Vagina (tissue), 2 donors: ENCODE measurements at regions of chr15 and their contacts with region 1.

Region 1: GRCh38 chr15:67456677-67457529 is 64.0 kb upstream of the C15orf61 start:
- DNase-seq: no peak
- H3K4me3 ChIP-seq: no peak overlapping the region
- H3K27ac ChIP-seq: no peak overlapping the region
- H3K4me1 ChIP-seq: no peaks in the 10 kb centered on the region
- H3K27me3 ChIP-seq: no peaks in the 10 kb centered on the region
- CTCF ChIP-seq: peak; percentile 64 to 74 (median 66)
- POLR2A ChIP-seq: no peak

Region 2: DNA sequence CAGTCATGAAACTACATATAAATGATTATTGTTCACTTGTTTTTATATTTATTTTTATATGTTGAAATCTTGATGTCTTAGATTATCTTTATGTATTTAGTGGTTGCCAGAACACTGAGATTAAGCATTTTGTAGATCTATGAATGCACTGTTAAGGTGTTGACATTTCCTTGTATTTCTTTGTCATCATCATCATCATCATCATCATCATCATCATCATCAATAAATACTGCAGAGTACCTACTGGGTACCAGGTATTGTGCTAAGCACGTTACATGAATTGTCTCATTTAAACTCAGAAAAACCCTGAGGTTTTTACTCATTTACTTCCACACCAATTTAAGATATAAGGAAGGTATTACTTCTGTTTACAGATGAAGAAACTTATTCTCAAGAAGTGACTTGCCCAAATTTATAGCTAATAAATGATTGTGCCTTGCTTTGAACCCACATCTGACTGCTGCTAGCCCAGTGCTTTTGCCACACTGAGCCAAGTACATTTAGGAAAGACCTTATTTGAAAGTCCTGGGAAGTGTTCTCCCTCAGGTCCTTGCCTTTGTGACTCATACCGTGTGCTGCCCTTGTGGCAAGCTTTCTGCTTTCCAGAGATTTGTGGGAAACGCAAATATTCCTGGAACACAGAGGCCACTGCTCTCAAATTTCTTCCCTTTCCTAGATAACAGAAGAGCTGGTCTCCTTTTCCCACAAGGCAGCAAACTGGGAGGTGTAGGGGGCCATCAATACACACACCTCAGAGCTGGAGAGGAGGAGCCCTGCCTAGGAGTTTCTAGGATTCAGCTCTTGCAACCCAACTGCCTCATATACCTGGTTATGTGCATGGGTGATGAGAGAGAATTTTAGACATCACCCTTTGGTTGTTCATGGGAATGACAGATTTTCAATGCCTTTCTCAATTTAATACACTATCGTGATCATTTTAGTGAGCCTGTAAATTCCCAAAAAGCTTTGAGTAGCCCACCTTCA is 51.4 kb before region 1 on chr15:
- intact Hi-C with region 1: no loop called
- DNase-seq: no peak
- H3K4me3 ChIP-seq: no peak overlapping the region
- H3K27ac ChIP-seq: no peak overlapping the region
- H3K4me1 ChIP-seq: no peaks in the 10 kb centered on the region
- H3K27me3 ChIP-seq: no peaks in the 10 kb centered on the region
- CTCF ChIP-seq: no peak
- POLR2A ChIP-seq: no peak

Region 3: DNA sequence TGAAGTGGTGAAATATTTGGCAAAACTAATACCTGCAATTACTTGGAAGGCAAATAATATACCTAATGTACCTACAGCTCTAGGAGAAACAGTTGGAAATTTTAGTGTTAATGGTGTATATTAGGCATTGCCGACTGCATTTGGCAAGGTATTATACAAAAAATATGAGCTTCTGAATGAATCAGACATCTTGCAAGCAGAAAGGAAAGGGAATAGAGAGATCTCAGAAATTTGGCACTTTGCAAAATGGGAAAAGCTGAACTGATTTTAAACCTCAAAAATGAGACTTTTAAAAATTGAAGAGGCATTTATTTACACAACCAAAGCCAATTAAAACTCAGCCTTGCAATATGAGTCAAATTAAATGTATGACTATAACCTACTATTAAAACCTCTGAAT is 23.8 kb after region 1 on chr15:
- intact Hi-C with region 1: no loop called
- DNase-seq: no peak
- H3K4me3 ChIP-seq: no peak overlapping the region
- H3K27ac ChIP-seq: no peak overlapping the region
- H3K4me1 ChIP-seq: no peaks in the 10 kb centered on the region
- H3K27me3 ChIP-seq: no peaks in the 10 kb centered on the region
- CTCF ChIP-seq: no peak
- POLR2A ChIP-seq: no peak

Region 4: GRCh38 chr15:67833710-67834511 is 377.0 kb after region 1 on chr15:
- intact Hi-C with region 1: loop called (anchors 5 kb)
- DNase-seq: no peak
- H3K4me3 ChIP-seq: peak overlapping the region; percentile 38 to 46
- H3K27ac ChIP-seq: no peak overlapping the region
- H3K4me1 ChIP-seq: peaks cover 55% of the 10 kb centered on the region
- H3K27me3 ChIP-seq: peaks cover 27% of the 10 kb centered on the region
- CTCF ChIP-seq: peak in 2 of 3 experiments; percentile 19 to 38
- POLR2A ChIP-seq: no peak